H1 (cell line): ENCODE measurements at regions of chr1 and their contacts with region 1.

Region 1: DNA sequence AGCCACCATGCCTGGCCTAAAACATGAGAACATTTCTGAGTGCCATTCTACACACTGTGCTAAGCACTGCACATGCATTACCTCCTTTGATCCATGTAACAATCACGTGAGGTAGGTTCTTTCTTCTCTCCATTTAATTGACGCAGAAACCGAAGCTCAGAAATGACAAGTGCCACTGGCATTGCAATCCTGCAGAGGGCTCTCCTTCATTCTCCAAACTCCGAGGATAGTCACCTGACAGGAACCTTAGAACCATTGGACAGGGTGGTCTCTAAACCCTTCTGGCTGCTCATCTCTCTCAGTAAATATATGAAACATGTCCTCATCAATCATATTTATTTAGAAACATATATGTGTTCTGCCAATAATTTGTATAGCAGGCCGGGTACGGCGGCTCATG is 167.1 kb upstream of the JUN start:
- DNase-seq: no peak
- H3K4me3 ChIP-seq: no peak overlapping the region
- H3K27ac ChIP-seq: no peak overlapping the region
- H3K4me1 ChIP-seq: no peaks in the 10 kb centered on the region
- H3K27me3 ChIP-seq: no peaks in the 10 kb centered on the region
- CTCF ChIP-seq: peak in 2 of 3 experiments; percentile 29 to 42; a peak in 3 of 4 replicates
- EP300 ChIP-seq: no peak
- POLR2A ChIP-seq: no peak
- RAD21 ChIP-seq: peak; percentile 69 to 80

Region 2: GRCh38 chr1:58936973-58937372 is 13.9 kb before region 1 on chr1:
- CTCF ChIA-PET with region 1: interaction called, 11 read pairs
- POLR2A ChIA-PET with region 1: interaction called, 3 read pairs
- DNase-seq: no peak
- H3K4me3 ChIP-seq: no peak overlapping the region
- H3K27ac ChIP-seq: no peak overlapping the region
- H3K4me1 ChIP-seq: no peaks in the 10 kb centered on the region
- H3K27me3 ChIP-seq: no peaks in the 10 kb centered on the region
- CTCF ChIP-seq: no peak
- EP300 ChIP-seq: no peak
- POLR2A ChIP-seq: no peak
- RAD21 ChIP-seq: no peak

Region 3: GRCh38 chr1:58975888-58976287 is 25.0 kb after region 1 on chr1:
- CTCF ChIA-PET with region 1: no interaction called
- POLR2A ChIA-PET with region 1: no interaction called
- DNase-seq: no peak
- H3K4me3 ChIP-seq: no peak overlapping the region
- H3K27ac ChIP-seq: no peak overlapping the region
- H3K4me1 ChIP-seq: no peaks in the 10 kb centered on the region; a peak in 1 of 7 replicates
- H3K27me3 ChIP-seq: no peaks in the 10 kb centered on the region; a peak in 1 of 7 replicates
- CTCF ChIP-seq: no peak
- EP300 ChIP-seq: no peak
- POLR2A ChIP-seq: no peak
- RAD21 ChIP-seq: no peak